AG04450 (cell line): ENCODE measurements at regions of chr2 and their contacts with region 1.

Region 1: GRCh38 chr2:20326163-20326780 is 24.4 kb downstream of the PUM2 start:
- DNase-seq: peak; percentile 30
- H3K4me3 ChIP-seq: no peak overlapping the region
- H3K27ac ChIP-seq: no peak overlapping the region
- H3K27me3 ChIP-seq: no peaks in the 10 kb centered on the region
- CTCF ChIP-seq: peak; percentile 91

Region 2: GRCh38 chr2:20282916-20283592 is 43.2 kb before region 1 on chr2:
- CTCF ChIA-PET with region 1: interaction called, 11 read pairs
- POLR2A ChIA-PET with region 1: no interaction called
- DNase-seq: peak; percentile 6
- H3K4me3 ChIP-seq: no peak overlapping the region
- H3K27ac ChIP-seq: no peak overlapping the region
- H3K27me3 ChIP-seq: no peaks in the 10 kb centered on the region
- CTCF ChIP-seq: no peak

Region 3: GRCh38 chr2:20304411-20304810 is 21.9 kb before region 1 on chr2:
- CTCF ChIA-PET with region 1: interaction called, 31 read pairs
- POLR2A ChIA-PET with region 1: no interaction called
- DNase-seq: peak; percentile 15
- H3K4me3 ChIP-seq: no peak overlapping the region
- H3K27ac ChIP-seq: no peak overlapping the region
- H3K27me3 ChIP-seq: no peaks in the 10 kb centered on the region
- CTCF ChIP-seq: no peak

Region 4: DNA sequence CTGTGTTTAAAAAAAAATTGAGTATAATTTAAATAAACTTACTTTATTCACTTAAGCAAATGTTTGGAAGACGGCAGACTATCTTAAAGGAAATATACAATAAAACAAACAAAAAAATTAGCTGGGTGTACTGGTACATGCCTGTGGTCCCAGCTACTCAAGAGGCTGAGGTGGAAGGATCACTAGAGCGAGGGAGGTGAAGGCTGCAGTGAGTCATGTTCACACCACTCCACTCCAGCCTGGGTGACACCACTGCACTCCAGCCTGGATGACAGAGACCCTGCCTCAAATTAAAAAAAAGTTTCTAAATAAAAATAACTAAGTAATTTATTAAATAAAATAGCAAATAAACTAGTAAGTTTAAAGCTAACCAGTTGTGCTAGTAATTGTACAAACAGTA is 16.9 kb after region 1 on chr2:
- CTCF ChIA-PET with region 1: interaction called, 130 read pairs
- POLR2A ChIA-PET with region 1: interaction called, 3 read pairs
- DNase-seq: no peak
- H3K4me3 ChIP-seq: no peak overlapping the region
- H3K27ac ChIP-seq: no peak overlapping the region
- H3K27me3 ChIP-seq: no peaks in the 10 kb centered on the region
- CTCF ChIP-seq: no peak

Region 5: DNA sequence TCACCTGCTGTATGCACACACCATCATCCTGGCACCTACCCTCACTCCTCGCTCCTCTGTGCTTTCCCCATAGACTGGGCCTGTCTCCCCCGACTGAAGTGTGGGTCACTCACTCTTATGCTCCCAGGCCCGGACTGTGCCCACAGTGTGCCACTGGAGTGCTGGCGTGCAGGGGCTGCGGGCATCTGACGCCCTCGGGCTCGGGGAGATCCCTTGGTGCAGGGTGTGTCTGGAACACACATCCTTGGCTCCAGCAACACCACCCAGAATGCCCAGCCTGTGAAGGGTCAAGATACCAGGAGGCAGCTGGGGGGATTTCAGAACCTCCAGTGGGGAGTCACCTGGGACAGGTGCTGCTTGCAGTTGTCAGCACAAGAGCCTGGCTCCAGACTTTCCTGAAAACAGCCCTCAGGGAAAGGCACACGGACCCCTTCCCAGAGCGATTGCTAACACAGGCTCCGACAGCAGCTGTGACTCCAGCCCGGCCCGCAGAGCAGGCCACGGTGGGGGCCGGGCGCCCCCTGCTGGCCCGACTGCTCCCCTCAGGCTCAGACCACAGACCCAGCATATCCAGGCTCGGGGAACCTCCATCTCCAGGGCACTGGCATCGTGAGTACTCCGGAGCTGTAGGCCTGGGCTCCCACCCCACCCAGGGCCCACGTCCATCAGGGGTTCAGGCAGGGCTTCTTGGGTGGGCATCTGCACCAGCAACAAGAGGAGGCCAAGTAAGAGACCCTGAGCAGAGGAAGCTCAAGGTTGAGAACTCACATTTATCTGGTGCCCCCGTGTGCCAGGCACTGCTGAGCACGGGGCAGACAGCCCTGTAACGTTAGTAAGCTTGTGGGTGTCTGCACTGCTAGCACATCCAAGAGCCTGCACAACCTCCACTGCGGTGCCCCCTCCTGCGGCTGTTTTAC is 316.0 kb after region 1 on chr2:
- CTCF ChIA-PET with region 1: interaction called, 23 read pairs
- POLR2A ChIA-PET with region 1: no interaction called
- DNase-seq: no peak
- H3K4me3 ChIP-seq: no peak overlapping the region
- H3K27ac ChIP-seq: no peak overlapping the region
- H3K27me3 ChIP-seq: no peaks in the 10 kb centered on the region
- CTCF ChIP-seq: peak; percentile 94